Posterior cingulate gyrus (tissue), 11 donors: ENCODE measurements at regions of chr11 and their contacts with region 1.

Region 1: DNA sequence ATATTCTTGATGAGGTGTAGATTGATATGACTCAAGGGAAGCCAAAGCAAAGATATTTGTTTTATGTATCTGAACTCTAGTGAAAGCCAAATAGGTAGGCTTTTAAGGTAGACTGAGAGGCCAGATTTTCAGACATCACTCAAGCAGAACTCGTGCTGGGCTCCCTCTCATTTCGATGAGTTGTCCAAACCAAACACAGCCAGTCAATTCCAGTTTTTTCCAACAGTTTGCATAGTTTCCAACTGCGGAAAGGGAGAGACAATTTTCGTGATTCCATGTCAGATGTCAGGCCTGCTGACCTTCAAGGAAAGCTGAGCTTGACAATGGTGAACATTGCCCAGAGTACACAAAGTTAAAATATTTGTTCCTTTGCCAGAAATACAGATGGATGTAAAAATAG is 110.9 kb upstream of the MPPED2 start:
- DNase-seq: no peak

Region 2: DNA sequence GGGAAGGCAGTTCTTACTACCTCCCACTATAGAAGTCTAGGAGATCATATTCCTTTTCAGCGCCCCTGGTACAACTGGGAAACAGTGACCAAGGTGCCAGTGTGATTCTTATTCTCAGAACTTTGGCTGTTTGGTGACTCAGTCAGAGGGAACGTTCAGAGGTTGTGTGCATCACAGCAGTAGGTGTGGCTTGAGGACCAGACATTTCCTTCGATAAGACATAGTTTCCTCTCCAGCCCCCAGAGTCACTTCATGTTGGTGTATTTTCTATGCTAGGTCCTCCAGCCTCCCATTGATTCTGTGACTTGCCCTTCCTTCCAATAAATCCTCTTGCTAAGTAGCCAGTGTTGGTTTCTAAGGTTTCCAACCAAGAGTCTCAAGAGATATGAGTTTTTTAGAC is 61.0 kb after region 1 on chr11:
- intact Hi-C with region 1: loop called (anchors 10 kb)
- DNase-seq: no peak

Region 3: GRCh38 chr11:31019786-31020185 is 322.8 kb after region 1 on chr11:
- intact Hi-C with region 1: no loop called
- DNase-seq: no peak